Adrenal gland (tissue), 19 donors: ENCODE measurements at regions of chr3 and their contacts with region 1.

Region 1: GRCh38 chr3:59857589-59858346 is 807.9 kb upstream of the CFAP20DC start:
- DNase-seq: peak; percentile 62 to 93 (median 84)
- H3K4me3 ChIP-seq: no peak overlapping the region
- H3K27ac ChIP-seq: no peak overlapping the region
- H3K4me1 ChIP-seq: no peaks in the 10 kb centered on the region
- H3K27me3 ChIP-seq: no peaks in the 10 kb centered on the region
- CTCF ChIP-seq: peak; percentile 81 to 93 (median 90)
- POLR2A ChIP-seq: no peak

Region 2: DNA sequence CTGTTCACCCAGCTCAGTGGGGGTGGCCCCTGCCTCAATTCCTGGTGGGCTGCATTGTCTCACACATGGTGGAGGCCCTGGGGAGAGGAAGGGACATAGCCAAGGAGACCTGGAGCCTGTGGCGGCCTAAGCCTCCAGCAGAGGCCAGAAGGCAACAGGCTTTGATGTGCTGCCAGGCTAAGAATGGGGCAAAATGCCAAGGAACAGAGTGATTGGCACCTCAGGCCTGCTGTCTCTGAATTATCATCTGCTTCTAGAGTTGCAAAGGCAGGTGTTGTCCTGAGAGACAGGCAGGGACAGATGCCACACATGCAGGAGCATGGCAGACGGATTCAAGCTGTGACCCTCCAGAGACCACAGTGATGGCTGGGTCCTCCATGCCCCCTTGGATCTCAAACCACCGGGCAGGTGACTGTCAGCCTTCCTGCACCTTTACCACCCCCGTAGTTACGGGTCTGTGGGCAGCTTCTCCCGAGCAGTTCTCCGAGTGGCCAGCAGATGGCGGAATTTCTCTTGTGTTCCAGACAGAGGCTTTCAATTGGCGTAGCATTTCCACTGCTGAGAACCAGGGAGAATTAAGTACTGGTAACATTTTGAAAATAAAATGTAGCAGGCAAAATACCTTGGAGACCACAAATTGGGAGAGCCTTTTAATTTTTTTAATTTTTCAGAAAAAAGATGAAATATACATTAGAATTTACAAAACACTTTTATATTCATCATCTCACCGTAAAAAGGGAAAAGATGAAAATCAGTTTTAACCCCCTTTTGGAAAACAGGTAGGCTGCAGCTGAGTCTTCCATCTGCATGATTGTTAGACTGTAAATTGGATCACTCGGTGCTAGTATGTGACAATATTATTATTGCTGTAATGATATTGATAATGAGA is 282.4 kb before region 1 on chr3:
- intact Hi-C with region 1: loop called (anchors 5 kb)
- DNase-seq: peak; percentile 76 to 96 (median 88)
- H3K4me3 ChIP-seq: no peak overlapping the region
- H3K27ac ChIP-seq: no peak overlapping the region
- H3K4me1 ChIP-seq: no peaks in the 10 kb centered on the region
- H3K27me3 ChIP-seq: peaks cover 4% of the 10 kb centered on the region
- CTCF ChIP-seq: peak; percentile 88 to 99 (median 94)
- POLR2A ChIP-seq: no peak